Psoas muscle (tissue), 8 donors: ENCODE measurements at regions of chr11 and their contacts with region 1.

Region 1: DNA sequence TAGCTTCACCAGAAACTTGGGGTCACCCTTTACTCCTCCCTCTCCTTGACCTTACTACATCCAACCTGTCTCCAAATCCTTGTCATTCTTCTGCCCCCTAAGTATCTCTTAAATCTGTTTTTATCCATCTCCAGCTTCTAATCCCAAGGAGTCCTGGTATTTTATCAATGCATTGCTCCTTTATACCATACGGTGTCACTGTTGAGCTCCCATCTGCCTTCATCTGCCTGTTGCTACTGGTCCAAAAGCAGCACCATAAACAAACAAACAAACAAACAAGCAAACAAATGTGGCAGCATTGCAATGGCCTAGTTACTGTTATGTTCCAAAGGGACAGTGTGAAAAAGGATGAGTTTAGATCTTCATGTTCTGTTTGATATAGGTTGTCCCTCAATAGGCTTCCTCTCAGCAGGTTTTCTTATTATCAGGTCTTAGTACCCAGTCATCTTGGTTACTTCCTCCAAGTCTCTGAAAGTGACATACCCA is 34.2 kb downstream of the DNHD1 start:
- DNase-seq: no peak
- ATAC-seq: peak; percentile 78 to 94 (median 84)
- H3K4me3 ChIP-seq: no peak overlapping the region
- H3K27ac ChIP-seq: no peak overlapping the region
- H3K4me1 ChIP-seq: no peaks in the 10 kb centered on the region
- H3K27me3 ChIP-seq: no peaks in the 10 kb centered on the region
- CTCF ChIP-seq: peak; percentile 77

Region 2: DNA sequence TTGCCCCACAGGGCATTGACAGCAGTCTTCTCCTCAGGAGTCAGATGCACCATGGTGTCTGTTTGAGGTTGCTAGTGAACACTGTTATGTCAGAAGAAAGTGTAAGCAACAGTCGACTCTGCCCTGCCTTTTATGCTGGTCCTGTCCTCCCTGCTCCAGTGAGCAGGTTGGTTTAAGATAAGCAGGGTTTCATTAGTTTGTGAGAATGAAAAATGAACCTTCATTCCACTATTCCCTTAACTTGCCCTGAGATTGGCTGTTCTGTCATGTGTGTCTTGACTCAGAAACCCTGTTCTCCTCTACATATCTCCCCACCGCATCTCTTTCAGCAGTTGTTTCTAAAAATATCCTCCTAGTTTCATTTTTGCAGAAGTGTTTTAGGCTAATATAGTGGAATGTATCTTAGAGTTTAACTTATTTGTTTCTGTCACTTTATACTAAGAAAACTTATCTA is 1296.9 kb before region 1 on chr11 and contains the start of gene HBD:
- intact Hi-C with region 1: no loop called
- DNase-seq: no peak
- ATAC-seq: no peak
- H3K4me3 ChIP-seq: no peak within 1 kb of the TSS
- H3K27ac ChIP-seq: no peak within 1 kb of the TSS
- H3K4me1 ChIP-seq: no peaks in the 10 kb centered on the region
- H3K27me3 ChIP-seq: no peaks in the 10 kb centered on the region
- CTCF ChIP-seq: no peak
- total RNA-seq, gene HBD: 1.6 to 6.2 TPM in 2 of 4 donors, not detected in the others

Region 3: GRCh38 chr11:6682936-6683861 is 151.9 kb after region 1 on chr11 and contains the start of gene MRPL17:
- intact Hi-C with region 1: loop called (anchors 1 to 5 kb)
- DNase-seq: peak; percentile 99 to 100
- ATAC-seq: peak; percentile 97 to 99 (median 98)
- H3K4me3 ChIP-seq: peak within 1 kb of the TSS; percentile 96
- H3K27ac ChIP-seq: peak within 1 kb of the TSS; percentile 82
- H3K4me1 ChIP-seq: peaks cover 14% of the 10 kb centered on the region
- H3K27me3 ChIP-seq: no peaks in the 10 kb centered on the region
- CTCF ChIP-seq: peak; percentile 85
- total RNA-seq, gene MRPL17: 27.2 to 44.8 (median 38.8) TPM

Region 4: GRCh38 chr11:6705905-6706535 is 174.7 kb after region 1 on chr11:
- intact Hi-C with region 1: loop called (anchors 2 to 5 kb)
- DNase-seq: no peak
- ATAC-seq: peak; percentile 46 to 83 (median 70)
- H3K4me3 ChIP-seq: no peak overlapping the region
- H3K27ac ChIP-seq: no peak overlapping the region
- H3K4me1 ChIP-seq: peaks cover 4% of the 10 kb centered on the region
- H3K27me3 ChIP-seq: no peaks in the 10 kb centered on the region
- CTCF ChIP-seq: peak; percentile 91

Region 5: GRCh38 chr11:7021318-7021717 is 490.0 kb after region 1 on chr11:
- intact Hi-C with region 1: no loop called
- DNase-seq: no peak
- ATAC-seq: no peak
- H3K4me3 ChIP-seq: no peak overlapping the region
- H3K27ac ChIP-seq: no peak overlapping the region
- H3K4me1 ChIP-seq: peaks cover 3% of the 10 kb centered on the region
- H3K27me3 ChIP-seq: peaks cover 0 to 2% (median 0%) of the 10 kb centered on the region in 3 donors
- CTCF ChIP-seq: no peak